Posterior vena cava (tissue), 2 donors: ENCODE measurements at regions of chr6 and their contacts with region 1.

Region 1: DNA sequence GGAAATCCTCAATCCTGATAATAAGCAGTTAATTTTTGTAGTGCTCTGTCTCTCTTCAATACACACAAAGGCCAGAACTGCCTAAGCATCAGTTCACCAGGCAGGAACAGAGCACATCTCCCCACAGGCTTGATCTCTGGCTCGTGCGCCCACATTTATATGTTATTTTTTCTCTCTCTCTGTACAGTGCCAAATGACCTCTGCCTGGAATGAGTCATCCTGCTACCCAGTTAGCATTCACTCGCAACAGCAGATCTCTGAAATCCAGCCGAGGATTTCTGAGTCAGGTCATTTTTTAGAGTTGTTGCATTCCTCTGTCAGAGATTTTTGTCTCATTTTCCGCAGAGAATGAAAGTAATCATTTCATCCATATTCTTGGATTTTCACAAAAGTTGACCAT is 107.1 kb downstream of the COL12A1 start:
- DNase-seq: peak; percentile 86

Region 2: DNA sequence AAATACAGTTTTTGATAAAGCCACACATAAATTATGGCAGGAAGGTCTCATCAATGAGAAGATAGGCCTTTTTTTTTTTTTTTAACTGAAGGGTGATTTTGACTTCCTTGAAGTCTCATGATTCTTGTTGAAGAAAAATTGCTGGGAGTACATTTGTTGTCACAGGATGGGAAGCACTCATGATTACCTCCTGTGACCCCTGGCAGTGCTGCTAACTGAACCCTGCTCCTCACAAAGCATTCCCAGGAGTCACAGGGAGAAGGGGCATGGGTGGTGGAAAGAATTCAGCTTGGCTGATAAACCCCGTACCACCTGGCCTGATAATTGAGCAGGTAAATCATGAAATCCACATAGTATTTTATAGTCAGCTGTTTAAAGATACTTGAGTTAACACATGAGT is 1315.8 kb before region 1 on chr6:
- intact Hi-C with region 1: no loop called
- DNase-seq: no peak

Region 3: DNA sequence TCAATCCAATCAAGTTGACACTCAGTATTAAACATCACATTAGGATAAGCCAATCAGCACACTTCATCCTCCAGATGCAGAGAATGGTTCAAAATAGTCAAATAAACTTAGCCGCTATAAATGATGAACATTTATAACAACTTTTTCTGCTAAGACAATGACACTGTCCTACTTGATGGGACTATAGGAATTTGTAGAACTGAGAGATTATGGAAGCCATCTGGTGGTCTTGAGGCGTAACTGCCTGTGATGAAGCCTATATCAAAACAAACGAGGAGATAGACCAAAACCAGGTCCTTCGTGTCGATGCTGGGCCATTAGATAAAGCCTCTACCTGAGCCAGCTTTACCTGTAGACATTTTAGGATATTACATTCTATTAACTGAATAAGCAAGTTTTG is 523.9 kb before region 1 on chr6:
- intact Hi-C with region 1: no loop called
- DNase-seq: no peak

Region 4: GRCh38 chr6:75115481-75115880 is 16.8 kb after region 1 on chr6:
- intact Hi-C with region 1: no loop called
- DNase-seq: no peak

Region 5: DNA sequence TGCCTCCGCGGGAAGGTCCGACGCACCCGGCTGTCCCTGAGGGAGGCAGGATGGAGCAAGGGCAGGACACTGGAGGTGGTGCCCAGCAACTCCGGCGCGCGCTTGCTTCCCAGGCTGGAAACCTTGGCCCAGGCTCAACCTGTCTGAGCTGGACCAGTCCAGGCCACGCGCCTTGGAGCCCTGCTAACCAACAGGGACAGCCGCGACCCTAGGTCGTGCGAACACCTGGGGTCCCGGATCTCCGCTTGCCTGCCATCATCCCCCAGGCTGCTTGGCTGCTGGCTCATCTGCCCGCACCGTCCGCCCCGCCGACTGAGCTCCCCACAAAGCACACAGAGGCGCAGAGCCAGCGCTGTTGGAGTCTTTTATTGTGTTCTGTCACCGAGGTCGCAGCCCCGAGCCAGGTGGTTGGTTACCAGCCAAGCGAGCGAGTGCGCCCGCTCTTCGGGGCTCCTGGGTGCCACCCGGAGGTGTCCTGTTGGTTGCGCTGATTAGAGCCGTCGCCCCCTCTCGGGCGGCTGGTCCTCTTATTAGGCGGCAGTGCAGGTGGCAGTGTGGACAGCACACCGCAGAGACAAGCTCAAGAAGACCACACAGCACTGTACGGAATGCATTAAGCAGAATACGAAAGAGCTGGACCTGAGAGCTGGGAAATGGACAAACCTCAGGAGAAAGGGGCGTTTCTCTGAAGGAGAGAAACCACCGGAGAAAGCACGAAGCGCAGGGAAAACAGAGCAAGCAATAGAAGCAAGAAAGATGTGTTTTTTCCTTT is 103.4 kb after region 1 on chr6:
- intact Hi-C with region 1: loop called in 1 of 2 experiments (anchors 2 kb)
- DNase-seq: peak; percentile 90